ENCODE measurements at regions of chr1 and their contacts with region 1.

Region 1: GRCh38 chr1:225652729-225653462 is at the start of gene ENAH:
- DNase-seq: peak; percentile 93
- H3K4me3 Mint-ChIP-seq: peak within 1 kb of the TSS; percentile 99
- H3K27ac Mint-ChIP-seq: peak within 1 kb of the TSS; percentile 94
- H3K4me1 Mint-ChIP-seq: peaks cover 67% of the 10 kb centered on the region
- H3K27me3 Mint-ChIP-seq: no peaks in the 10 kb centered on the region
- CTCF ChIP-seq: no peak
- total RNA-seq, gene ENAH: 346 and 420 TPM in 2 replicates

Region 2: GRCh38 chr1:225441314-225442122 is 211.4 kb before region 1 on chr1:
- CTCF ChIA-PET with region 1: no interaction called
- POLR2A ChIA-PET with region 1: no interaction called
- intact Hi-C with region 1: no loop called
- DNase-seq: no peak
- H3K4me3 Mint-ChIP-seq: no peak overlapping the region
- H3K27ac Mint-ChIP-seq: no peak overlapping the region
- H3K4me1 Mint-ChIP-seq: peaks cover 19% of the 10 kb centered on the region
- H3K27me3 Mint-ChIP-seq: no peaks in the 10 kb centered on the region
- CTCF ChIP-seq: no peak

Region 3: DNA sequence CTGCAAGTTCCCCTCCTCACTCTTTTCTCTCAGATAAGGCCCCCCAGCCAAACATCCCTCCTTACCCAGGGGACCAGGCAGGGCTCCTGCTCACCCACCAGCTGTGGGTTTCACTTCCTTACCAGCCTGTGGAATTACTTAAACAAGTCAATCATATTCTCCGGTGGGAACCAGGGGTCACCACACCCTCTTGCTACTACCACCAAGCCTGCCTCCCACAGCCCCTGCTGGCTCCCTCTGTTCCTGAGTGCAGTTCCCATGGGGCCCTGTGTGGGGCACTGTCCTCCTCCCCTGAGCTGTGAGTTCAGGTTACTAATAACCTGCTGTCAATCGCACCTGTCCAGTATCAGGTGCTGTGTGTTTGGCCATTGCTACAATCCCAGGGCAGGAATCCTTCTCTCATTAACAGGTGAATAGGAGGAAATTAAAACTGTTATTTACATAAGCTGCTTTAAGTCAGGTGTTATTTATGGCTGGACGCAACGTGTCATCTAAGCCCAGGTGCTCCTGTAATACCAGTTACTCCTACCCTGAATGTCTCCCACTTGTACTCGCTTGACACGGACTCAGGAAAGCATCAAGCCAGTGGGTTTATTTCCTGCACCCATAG is 172.0 kb before region 1 on chr1:
- CTCF ChIA-PET with region 1: interaction called, 11 read pairs
- POLR2A ChIA-PET with region 1: interaction called, 11 read pairs
- intact Hi-C with region 1: no loop called
- DNase-seq: peak; percentile 85
- H3K4me3 Mint-ChIP-seq: no peak overlapping the region
- H3K27ac Mint-ChIP-seq: no peak overlapping the region
- H3K4me1 Mint-ChIP-seq: peaks cover 7% of the 10 kb centered on the region
- H3K27me3 Mint-ChIP-seq: peaks cover 15% of the 10 kb centered on the region
- CTCF ChIP-seq: peak; percentile 100

Region 4: DNA sequence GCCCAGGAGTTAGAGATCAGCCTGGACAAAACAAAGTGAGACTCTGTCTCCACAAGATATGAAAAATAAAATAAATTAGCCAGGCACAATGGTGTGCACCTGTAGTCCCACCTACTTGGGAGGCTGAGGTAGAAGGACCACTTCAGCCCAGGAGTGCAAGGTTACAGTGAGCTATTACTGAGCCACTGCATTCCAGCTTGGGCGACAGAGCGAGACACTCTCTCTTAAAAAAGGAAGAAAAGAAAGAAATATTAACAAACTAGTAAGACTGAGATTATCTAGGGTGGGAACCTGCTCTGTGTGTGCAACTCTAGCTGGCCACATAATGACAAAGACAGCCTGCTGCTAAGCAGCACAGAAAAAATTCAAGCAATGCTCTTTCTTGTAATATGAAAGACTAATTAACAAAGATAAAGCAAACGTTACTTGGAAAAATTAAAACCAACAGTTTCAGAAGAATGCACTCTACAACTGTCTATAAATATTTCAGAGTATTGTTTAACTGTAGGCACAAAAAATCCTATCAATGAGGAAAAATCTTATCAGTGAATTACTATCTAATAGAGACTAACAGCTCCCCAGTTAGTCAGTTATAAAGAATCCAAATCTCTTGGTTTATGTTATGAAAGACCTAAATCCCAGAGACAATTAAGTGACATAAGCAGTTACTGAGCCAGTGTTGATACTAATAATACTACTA is 74.5 kb before region 1 on chr1:
- CTCF ChIA-PET with region 1: interaction called, 4 read pairs
- POLR2A ChIA-PET with region 1: interaction called, 16 read pairs
- intact Hi-C with region 1: no loop called
- DNase-seq: no peak
- H3K4me3 Mint-ChIP-seq: no peak overlapping the region
- H3K27ac Mint-ChIP-seq: no peak overlapping the region
- H3K4me1 Mint-ChIP-seq: peaks cover 28% of the 10 kb centered on the region
- H3K27me3 Mint-ChIP-seq: no peaks in the 10 kb centered on the region
- CTCF ChIP-seq: no peak

Region 5: DNA sequence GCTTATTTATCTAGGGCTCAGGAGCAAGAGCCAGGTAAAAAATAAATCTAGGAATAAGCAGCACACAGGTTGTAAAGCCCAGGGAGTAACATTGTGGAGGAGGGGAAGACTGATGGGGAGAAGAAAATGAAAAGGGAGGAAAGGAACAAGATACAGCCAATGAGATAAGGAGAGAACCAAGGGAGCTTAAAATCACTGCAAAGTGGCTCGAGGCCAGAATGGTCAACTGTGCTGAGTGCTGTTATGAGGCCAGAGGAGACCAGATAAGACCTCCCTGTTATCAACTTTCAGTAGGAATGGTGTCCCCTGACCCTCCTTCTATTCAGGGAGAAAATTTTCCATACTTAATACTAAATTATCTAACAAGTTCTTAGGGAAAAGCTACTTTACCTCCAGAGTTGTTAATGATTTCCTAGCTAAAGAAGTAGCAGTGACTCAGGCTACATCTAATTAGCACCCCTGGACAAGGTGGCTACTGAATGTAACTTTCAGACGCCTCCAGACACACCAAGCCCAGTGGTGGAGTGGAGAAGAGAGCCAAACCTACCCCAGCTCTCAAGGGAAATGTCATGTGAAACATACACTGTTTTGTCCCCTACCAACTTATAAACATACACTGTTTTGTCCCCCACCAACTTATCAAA is 25.5 kb before region 1 on chr1:
- CTCF ChIA-PET with region 1: interaction called, 6 read pairs
- POLR2A ChIA-PET with region 1: interaction called, 42 read pairs
- intact Hi-C with region 1: no loop called
- DNase-seq: no peak
- H3K4me3 Mint-ChIP-seq: no peak overlapping the region
- H3K27ac Mint-ChIP-seq: peak overlapping the region; percentile 47
- H3K4me1 Mint-ChIP-seq: peaks cover 31% of the 10 kb centered on the region
- H3K27me3 Mint-ChIP-seq: no peaks in the 10 kb centered on the region
- CTCF ChIP-seq: no peak

Region 6: DNA sequence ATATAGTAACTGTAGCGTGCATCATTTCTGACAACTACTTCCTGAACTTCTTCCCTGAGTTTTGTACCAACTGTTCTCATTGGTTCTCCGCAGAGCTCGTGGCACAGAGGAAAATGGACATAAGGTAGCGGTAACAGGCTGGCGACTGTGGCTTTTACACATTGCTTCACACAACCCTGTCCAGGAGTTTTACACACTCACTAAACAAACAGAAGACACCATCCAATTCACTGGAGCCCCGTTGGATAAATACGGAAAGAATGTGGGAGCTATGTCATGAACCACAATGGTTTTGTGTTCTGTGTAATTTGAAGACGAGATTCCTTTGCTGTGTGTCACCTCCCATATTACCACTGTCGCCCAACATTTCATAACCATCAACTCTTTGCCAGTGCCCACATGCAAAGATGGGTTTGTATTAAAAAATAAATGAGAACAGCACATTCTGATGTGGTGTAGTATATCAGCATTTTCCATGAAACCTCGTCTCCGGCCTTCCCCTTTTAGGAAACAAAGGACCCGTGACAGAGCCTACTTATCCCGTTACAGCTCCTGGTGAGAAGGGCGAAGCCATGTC is 47.4 kb after region 1 on chr1:
- CTCF ChIA-PET with region 1: interaction called, 16 read pairs
- POLR2A ChIA-PET with region 1: interaction called, 189 read pairs
- intact Hi-C with region 1: loop called (anchors 5 kb)
- DNase-seq: peak; percentile 100
- H3K4me3 Mint-ChIP-seq: peak overlapping the region; percentile 68
- H3K27ac Mint-ChIP-seq: peak overlapping the region; percentile 94
- H3K4me1 Mint-ChIP-seq: peaks cover 26% of the 10 kb centered on the region
- H3K27me3 Mint-ChIP-seq: no peaks in the 10 kb centered on the region
- CTCF ChIP-seq: no peak

Region 7: DNA sequence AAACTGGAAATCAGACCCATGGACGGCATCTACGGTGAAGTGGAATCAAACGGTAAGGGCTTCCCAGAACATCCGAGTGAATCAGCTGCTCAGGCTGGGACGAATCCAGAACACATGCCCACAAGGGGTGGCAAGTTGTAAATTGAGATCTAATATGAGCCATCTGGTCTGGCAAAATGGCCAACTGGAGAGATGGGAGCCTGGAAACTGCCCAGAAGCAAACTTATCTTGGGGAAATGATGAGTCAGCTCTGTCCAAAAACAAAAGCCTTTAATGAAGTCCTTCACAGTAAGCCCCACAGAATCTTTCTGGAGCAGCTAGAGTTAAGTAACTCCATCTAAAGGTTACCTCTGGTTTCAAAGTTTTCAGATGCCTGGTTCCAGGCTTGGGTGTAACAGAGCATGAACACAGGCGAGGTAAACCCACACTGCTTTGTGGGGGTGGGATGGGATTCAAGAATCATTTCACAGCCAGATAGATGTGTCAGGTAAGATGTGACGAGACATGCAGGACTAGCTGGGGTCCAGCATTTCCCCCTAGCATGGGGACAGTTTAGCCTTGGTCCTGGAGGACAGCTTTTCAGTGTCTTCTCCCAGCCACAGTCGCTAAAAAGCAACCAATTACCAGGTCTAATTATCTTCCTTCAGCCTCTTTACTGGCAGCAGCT is 114.2 kb after region 1 on chr1:
- CTCF ChIA-PET with region 1: interaction called, 68 read pairs
- POLR2A ChIA-PET with region 1: interaction called, 188 read pairs
- intact Hi-C with region 1: loop called (anchors 1 kb)
- DNase-seq: peak; percentile 99
- H3K4me3 Mint-ChIP-seq: peak overlapping the region; percentile 40
- H3K27ac Mint-ChIP-seq: peak overlapping the region; percentile 78
- H3K4me1 Mint-ChIP-seq: peaks cover 38% of the 10 kb centered on the region
- H3K27me3 Mint-ChIP-seq: no peaks in the 10 kb centered on the region
- CTCF ChIP-seq: no peak

Region 8: GRCh38 chr1:225977937-225978748 is 325.2 kb after region 1 on chr1:
- CTCF ChIA-PET with region 1: interaction called, 3 read pairs
- POLR2A ChIA-PET with region 1: no interaction called
- intact Hi-C with region 1: loop called (anchors 2 kb)
- DNase-seq: no peak
- H3K4me3 Mint-ChIP-seq: no peak overlapping the region
- H3K27ac Mint-ChIP-seq: no peak overlapping the region
- H3K4me1 Mint-ChIP-seq: peaks cover 5% of the 10 kb centered on the region
- H3K27me3 Mint-ChIP-seq: no peaks in the 10 kb centered on the region
- CTCF ChIP-seq: no peak

Measured in MCF 10A (cell line).